ENCODE measurements at regions of chr19 and their contacts with region 1.

Region 1: GRCh38 chr19:10574462-10574861 is 5.7 kb upstream of the CDKN2D start:
- DNase-seq: no peak
- ATAC-seq: no peak
- H3K4me3 Mint-ChIP-seq: no peak overlapping the region
- H3K27ac Mint-ChIP-seq: no peak overlapping the region
- H3K4me1 Mint-ChIP-seq: peaks cover 37% of the 10 kb centered on the region
- H3K27me3 Mint-ChIP-seq: no peaks in the 10 kb centered on the region

Region 2: GRCh38 chr19:10543420-10544241 is 30.8 kb before region 1 on chr19 and contains the start of gene ATG4D:
- CTCF ChIA-PET with region 1: interaction called, 34 read pairs
- POLR2A ChIA-PET with region 1: interaction called, 4 read pairs
- DNase-seq: peak; percentile 85
- ATAC-seq: peak; percentile 85
- H3K4me3 Mint-ChIP-seq: peak within 1 kb of the TSS; percentile 90
- H3K27ac Mint-ChIP-seq: peak within 1 kb of the TSS; percentile 88
- H3K4me1 Mint-ChIP-seq: peaks cover 21% of the 10 kb centered on the region
- H3K27me3 Mint-ChIP-seq: peaks cover 15% of the 10 kb centered on the region
- total RNA-seq, gene ATG4D: 46.1 to 46.9 TPM

Region 3: GRCh38 chr19:10677751-10678150 is 103.3 kb after region 1 on chr19:
- CTCF ChIA-PET with region 1: no interaction called
- POLR2A ChIA-PET with region 1: no interaction called
- DNase-seq: no peak
- ATAC-seq: no peak
- H3K4me3 Mint-ChIP-seq: no peak overlapping the region
- H3K27ac Mint-ChIP-seq: no peak overlapping the region
- H3K4me1 Mint-ChIP-seq: no peaks in the 10 kb centered on the region
- H3K27me3 Mint-ChIP-seq: no peaks in the 10 kb centered on the region

Measured in activated CD8-positive, alpha-beta T cell treated with anti-CD3 and anti-CD28 coated beads, Interleukin-2, amount 10 ng/mL, durations not matched to agents 7 days and 5 days (primary cell).